Heart right ventricle (tissue), 16 donors: ENCODE measurements at regions of chr10 and their contacts with region 1.

Region 1: GRCh38 chr10:116080553-116080952 is 192.5 kb downstream of the GFRA1 start:
- DNase-seq: no peak
- ATAC-seq: no peak
- H3K4me3 ChIP-seq: no peak overlapping the region
- H3K27ac ChIP-seq: no peak overlapping the region
- H3K4me1 ChIP-seq: no peaks in the 10 kb centered on the region
- H3K27me3 ChIP-seq: no peaks in the 10 kb centered on the region
- CTCF ChIP-seq: no peak

Region 2: GRCh38 chr10:115772606-115773005 is 307.9 kb before region 1 on chr10:
- intact Hi-C with region 1: no loop called
- DNase-seq: no peak
- ATAC-seq: peak in 1 of 8 donors; percentile 52
- H3K4me3 ChIP-seq: no peak overlapping the region
- H3K27ac ChIP-seq: no peak overlapping the region
- H3K4me1 ChIP-seq: peaks cover 0 to 5% (median 0%) of the 10 kb centered on the region in 9 donors
- H3K27me3 ChIP-seq: no peaks in the 10 kb centered on the region
- CTCF ChIP-seq: no peak

Region 3: GRCh38 chr10:116041948-116042347 is 38.6 kb before region 1 on chr10:
- intact Hi-C with region 1: loop called in 1 of 10 experiments (anchors 1 kb)
- DNase-seq: no peak
- ATAC-seq: no peak
- H3K4me3 ChIP-seq: no peak overlapping the region
- H3K27ac ChIP-seq: no peak overlapping the region
- H3K4me1 ChIP-seq: peaks cover 0 to 26% (median 14%) of the 10 kb centered on the region in 9 donors
- H3K27me3 ChIP-seq: no peaks in the 10 kb centered on the region
- CTCF ChIP-seq: no peak

Region 4: DNA sequence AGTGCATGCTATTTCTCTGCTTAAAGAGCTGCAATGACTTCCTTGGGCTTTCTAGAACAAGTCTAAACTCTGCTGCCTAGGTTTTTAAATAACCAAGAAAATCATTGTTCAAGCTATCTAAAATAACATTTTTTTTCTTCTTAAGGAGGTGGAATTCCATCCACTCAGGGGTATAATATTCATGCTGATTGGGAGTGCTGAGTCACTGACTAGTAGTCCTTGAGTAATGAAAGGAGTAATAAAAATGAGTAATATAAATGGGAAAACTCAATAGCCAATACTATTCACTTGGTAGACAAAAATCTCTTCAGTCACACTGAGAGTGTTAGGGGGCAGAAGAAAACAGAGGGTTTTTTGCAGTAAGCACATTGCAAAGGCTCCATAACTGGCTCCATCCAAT is 120.5 kb after region 1 on chr10:
- intact Hi-C with region 1: no loop called
- DNase-seq: no peak
- ATAC-seq: no peak
- H3K4me3 ChIP-seq: no peak overlapping the region
- H3K27ac ChIP-seq: no peak overlapping the region
- H3K4me1 ChIP-seq: no peaks in the 10 kb centered on the region
- H3K27me3 ChIP-seq: peaks cover 0 to 9% (median 0%) of the 10 kb centered on the region in 7 donors
- CTCF ChIP-seq: no peak